ENCODE measurements at regions of chrX and their contacts with region 1.

Region 1: DNA sequence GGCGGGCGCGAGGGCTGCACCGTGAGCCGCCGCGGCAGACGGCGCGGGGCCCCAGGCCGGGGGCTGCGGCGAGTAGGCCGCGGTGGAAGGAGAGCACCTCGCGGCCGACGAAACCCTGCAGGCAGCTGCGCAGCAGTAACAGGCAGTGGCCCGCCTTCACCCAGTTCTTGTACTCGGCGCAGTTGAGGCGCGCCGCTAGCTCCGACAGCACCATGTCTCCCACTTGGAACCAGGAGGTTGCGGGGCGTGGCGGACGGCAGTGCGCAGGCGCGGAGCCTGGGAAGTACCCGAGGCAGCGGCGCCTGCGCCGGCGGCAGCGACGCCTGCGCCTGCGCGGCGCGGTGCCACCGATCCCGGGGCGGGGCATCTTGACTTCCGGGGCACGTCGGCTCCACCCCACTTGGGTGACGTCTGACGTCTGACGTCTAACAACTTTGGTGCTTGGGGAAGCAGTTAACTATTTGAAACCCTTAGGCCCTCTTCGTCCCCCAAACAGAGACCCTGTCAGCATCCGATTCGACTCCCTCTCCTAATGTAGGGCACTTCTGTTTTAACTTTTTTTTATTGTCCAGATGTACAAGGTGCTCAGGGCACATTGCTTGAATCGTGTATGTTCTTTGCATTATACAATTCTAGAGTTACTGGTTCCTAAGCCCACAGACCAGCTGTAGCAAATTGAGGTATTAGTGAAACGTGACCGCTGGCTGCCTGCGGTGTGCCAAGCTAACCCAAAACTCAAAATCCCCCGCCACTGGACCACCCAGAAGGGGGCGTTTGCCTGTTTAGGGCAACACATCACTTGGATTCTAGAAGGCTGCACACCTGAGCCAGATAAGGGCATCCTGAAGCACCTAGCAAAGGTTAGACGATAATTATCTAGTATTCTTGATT is at the start of gene CXorf38:
- DNase-seq: peak; percentile 68
- ATAC-seq: peak; percentile 85
- H3K4me3 ChIP-seq: peak within 1 kb of the TSS; percentile 91
- H3K27ac ChIP-seq: peak within 1 kb of the TSS; percentile 70
- H3K4me1 ChIP-seq: no peaks in the 10 kb centered on the region
- H3K27me3 ChIP-seq: no peaks in the 10 kb centered on the region
- CTCF ChIP-seq: no peak
- EP300 ChIP-seq: no peak
- POLR2A ChIP-seq: peak; percentile 92
- RAD21 ChIP-seq: no peak
- polyA plus RNA-seq, gene CXorf38: 2.2 to 6.0 TPM

Region 2: DNA sequence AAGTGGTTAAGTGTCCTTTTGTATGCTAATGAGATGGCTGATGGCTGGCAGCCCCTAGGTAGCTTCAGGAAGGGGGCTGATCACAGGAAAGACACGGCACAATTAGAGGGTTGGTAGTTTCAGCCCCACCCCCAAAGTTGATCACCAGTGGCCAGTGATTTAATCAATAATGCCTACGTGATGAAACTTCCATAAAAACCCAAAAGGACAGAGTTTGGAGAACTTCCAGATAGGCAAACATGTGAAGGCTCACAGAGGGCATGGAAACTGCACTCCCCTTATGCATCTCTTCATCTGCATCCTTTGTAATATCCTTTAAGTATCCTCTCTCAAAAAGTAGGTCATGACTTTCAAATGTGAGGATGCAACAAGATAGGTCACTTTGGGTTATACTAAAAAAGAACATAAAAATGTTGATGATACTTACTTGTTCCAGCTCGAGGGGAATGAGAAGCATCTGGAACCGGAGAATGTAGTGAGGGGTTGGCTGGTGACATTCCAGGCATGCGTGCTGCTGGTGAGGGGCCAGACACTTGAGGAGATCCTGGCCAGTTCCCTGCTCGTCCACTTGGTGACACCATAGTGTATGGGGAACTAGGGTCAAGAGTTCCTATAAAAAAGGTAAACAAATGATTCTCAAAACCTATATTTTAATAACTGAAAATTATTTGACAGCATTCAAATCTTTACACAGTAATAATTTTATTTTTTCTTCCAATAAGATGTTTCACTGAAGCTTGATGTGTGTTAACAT is 16.5 kb after region 1 on chrX:
- CTCF ChIA-PET with region 1: interaction called, 15 read pairs
- POLR2A ChIA-PET with region 1: no interaction called
- RAD21 ChIA-PET with region 1: interaction called, 8 read pairs
- SMC1A ChIA-PET with region 1: interaction called, 11 read pairs
- in situ Hi-C with region 1: no loop called
- intact Hi-C with region 1: no loop called
- DNase-seq: no peak
- ATAC-seq: no peak
- H3K4me3 ChIP-seq: no peak overlapping the region
- H3K27ac ChIP-seq: no peak overlapping the region
- H3K4me1 ChIP-seq: no peaks in the 10 kb centered on the region; the same call in 1 of the 2 replicates
- H3K27me3 ChIP-seq: no peaks in the 10 kb centered on the region
- CTCF ChIP-seq: peak; percentile 14 to 26 (median 24); a peak in 2 of 6 replicates
- EP300 ChIP-seq: no peak
- POLR2A ChIP-seq: no peak
- RAD21 ChIP-seq: 0 out of 2 replicates have a peak, but pooled peaks have one; percentile 20

Region 3: DNA sequence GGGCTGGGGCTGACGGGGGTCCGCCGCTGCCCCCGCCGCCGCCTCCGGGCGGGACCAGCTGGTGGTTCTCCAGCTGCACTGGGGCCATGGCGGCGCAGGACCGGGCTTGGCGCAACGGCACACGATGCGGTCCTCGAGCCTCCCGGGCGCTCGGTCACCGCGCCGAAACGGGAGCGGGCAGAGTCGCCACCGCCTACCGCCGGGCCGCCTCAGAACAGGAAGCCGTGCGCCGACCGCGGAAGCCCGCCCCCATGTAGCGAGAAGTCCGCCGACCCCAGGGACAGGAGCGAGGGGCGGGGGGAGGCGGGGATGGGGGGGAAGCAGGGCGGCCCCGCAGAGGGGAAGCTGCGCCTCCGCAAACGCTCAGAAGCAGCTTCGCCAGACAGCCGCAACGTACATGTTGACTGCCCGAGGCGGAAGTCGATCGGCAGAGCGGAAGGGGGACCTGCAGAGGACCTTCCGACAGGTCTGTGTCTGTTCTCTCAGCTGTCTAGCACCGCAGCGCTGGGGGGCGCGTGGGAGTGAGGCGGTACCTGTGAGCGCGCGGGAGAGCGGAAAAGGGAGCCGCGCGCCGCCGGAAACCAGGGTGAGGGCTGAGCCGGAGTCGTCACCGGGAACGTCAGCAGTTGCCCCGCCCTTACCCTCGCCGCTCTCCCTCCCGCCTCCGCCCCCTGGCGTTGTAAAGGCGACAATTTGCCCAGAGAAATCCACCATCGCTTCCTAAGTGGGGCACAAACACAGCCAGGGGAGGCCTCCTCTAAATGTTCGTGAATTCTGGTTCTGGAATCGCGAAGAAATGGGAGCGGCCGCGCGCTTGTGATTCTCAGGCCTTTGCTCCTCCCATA is 88.0 kb after region 1 on chrX and contains the start of gene MED14:
- CTCF ChIA-PET with region 1: interaction called, 15 read pairs
- POLR2A ChIA-PET with region 1: no interaction called
- RAD21 ChIA-PET with region 1: interaction called, 8 read pairs
- SMC1A ChIA-PET with region 1: interaction called, 31 read pairs
- in situ Hi-C with region 1: no loop called
- intact Hi-C with region 1: no loop called
- DNase-seq: peak; percentile 73
- ATAC-seq: peak; percentile 92
- H3K4me3 ChIP-seq: peak within 1 kb of the TSS; percentile 86
- H3K27ac ChIP-seq: peak within 1 kb of the TSS; percentile 92
- H3K4me1 ChIP-seq: no peaks in the 10 kb centered on the region; the same call in 1 of the 2 replicates
- H3K27me3 ChIP-seq: no peaks in the 10 kb centered on the region
- CTCF ChIP-seq: peak; percentile 62 to 64 (median 62)
- EP300 ChIP-seq: 0 out of 4 replicates have a peak, but pooled peaks of 1 of the 2 experiments have one; percentile 5
- POLR2A ChIP-seq: peak; percentile 93
- RAD21 ChIP-seq: no peak
- polyA plus RNA-seq, gene MED14: 8.8 to 17.0 TPM

Region 4: GRCh38 chrX:40877887-40878286 is 230.3 kb after region 1 on chrX:
- CTCF ChIA-PET with region 1: interaction called, 8 read pairs
- POLR2A ChIA-PET with region 1: no interaction called
- RAD21 ChIA-PET with region 1: interaction called, 8 read pairs
- SMC1A ChIA-PET with region 1: interaction called, 13 read pairs
- in situ Hi-C with region 1: no loop called
- intact Hi-C with region 1: loop called (anchors 10 kb)
- DNase-seq: no peak
- ATAC-seq: peak; percentile 67
- H3K4me3 ChIP-seq: no peak overlapping the region
- H3K27ac ChIP-seq: no peak overlapping the region
- H3K4me1 ChIP-seq: no peaks in the 10 kb centered on the region
- H3K27me3 ChIP-seq: no peaks in the 10 kb centered on the region
- CTCF ChIP-seq: peak; percentile 24 to 44 (median 29); a peak in 4 of 6 replicates
- EP300 ChIP-seq: no peak
- POLR2A ChIP-seq: no peak
- RAD21 ChIP-seq: peak; percentile 37; the same call in 1 of the 2 replicates

Region 5: DNA sequence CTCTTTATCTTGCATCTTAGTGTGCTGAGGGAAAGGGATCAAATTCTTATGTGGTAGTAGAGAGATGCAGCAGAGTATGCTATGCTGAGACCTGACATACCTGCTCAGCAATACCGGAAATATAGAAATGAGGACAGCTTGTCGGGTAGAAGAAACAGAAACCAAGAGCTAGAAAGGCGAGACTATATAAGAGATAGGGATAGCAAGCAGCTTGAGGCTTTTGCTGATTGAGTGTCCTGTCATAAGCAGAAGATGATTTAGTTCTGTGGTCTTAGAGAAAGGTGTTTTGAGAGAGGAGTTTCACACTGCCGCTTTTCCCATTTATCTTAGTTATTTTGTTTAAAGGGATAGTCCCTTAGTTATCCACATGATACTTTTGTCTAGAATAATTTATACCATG is 469.4 kb after region 1 on chrX:
- CTCF ChIA-PET with region 1: interaction called, 94 read pairs
- POLR2A ChIA-PET with region 1: interaction called, 3 read pairs
- RAD21 ChIA-PET with region 1: interaction called, 49 read pairs
- SMC1A ChIA-PET with region 1: interaction called, 49 read pairs
- in situ Hi-C with region 1: loop called (anchors 10 kb)
- intact Hi-C with region 1: loop called (anchors 1 kb)
- DNase-seq: peak; percentile 71
- ATAC-seq: peak; percentile 78
- H3K4me3 ChIP-seq: 0 out of 2 replicates have a peak overlapping the region, but pooled peaks have one; percentile 26
- H3K27ac ChIP-seq: peak overlapping the region; percentile 65; the same call in 1 of the 2 replicates
- H3K4me1 ChIP-seq: peaks cover 40% of the 10 kb centered on the region
- H3K27me3 ChIP-seq: no peaks in the 10 kb centered on the region
- CTCF ChIP-seq: no peak
- EP300 ChIP-seq: peak in 1 of 2 experiments; percentile 57; a peak in 1 of 4 replicates
- POLR2A ChIP-seq: no peak
- RAD21 ChIP-seq: no peak

Region 6: DNA sequence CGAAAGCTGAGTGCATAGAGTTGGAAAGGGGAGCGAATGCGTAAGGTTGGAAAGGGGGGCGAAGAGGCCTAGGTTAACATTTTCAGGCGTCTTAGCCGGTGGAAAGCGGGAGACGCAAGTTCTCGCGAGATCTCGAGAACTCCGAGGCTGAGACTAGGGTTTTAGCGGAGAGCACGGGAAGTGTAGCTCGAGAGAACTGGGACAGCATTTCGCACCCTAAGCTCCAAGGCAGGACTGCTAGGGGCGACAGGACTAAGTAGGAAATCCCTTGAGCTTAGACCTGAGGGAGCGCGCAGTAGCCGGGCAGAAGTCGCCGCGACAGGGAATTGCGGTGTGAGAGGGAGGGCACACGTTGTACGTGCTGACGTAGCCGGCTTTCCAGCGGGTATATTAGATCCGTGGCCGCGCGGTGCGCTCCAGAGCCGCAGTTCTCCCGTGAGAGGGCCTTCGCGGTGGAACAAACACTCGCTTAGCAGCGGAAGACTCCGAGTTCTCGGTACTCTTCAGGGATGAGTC is 686.2 kb after region 1 on chrX and contains the start of gene DDX3X:
- CTCF ChIA-PET with region 1: no interaction called
- POLR2A ChIA-PET with region 1: interaction called, 4 read pairs
- RAD21 ChIA-PET with region 1: no interaction called
- SMC1A ChIA-PET with region 1: interaction called, 5 read pairs
- in situ Hi-C with region 1: loop called (anchors 10 kb)
- intact Hi-C with region 1: loop called (anchors 5 kb)
- DNase-seq: peak; percentile 91
- ATAC-seq: peak; percentile 72
- H3K4me3 ChIP-seq: peak within 1 kb of the TSS; percentile 91
- H3K27ac ChIP-seq: peak within 1 kb of the TSS; percentile 99
- H3K4me1 ChIP-seq: peaks cover 10% of the 10 kb centered on the region
- H3K27me3 ChIP-seq: no peaks in the 10 kb centered on the region; a peak in 1 of 4 replicates
- CTCF ChIP-seq: peak; percentile 19 to 37 (median 29); a peak in 5 of 6 replicates
- EP300 ChIP-seq: peak in 1 of 2 experiments; percentile 4; a peak in 1 of 4 replicates
- POLR2A ChIP-seq: no peak; the same call in none of the 2 replicates
- RAD21 ChIP-seq: 0 out of 2 replicates have a peak, but pooled peaks have one; percentile 3
- polyA plus RNA-seq, gene DDX3X: 52.0 to 56.7 TPM